Endothelial cell of umbilical vein (primary cell): ENCODE measurements at regions of chr7 and their contacts with region 1.

Region 1: GRCh38 chr7:100626530-100627237 is 14.3 kb downstream of the MOSPD3 start:
- DNase-seq: peak; percentile 83
- H3K4me3 ChIP-seq: peak overlapping the region in 1 of 3 experiments; percentile 16
- H3K27ac ChIP-seq: no peak overlapping the region
- H3K4me1 ChIP-seq: peaks cover 3% of the 10 kb centered on the region
- H3K27me3 ChIP-seq: no peaks in the 10 kb centered on the region
- CTCF ChIP-seq: no peak
- POLR2A ChIP-seq: no peak

Region 2: GRCh38 chr7:100655908-100656674 is 29.4 kb after region 1 on chr7 and contains the start of gene ACTL6B:
- CTCF ChIA-PET with region 1: no interaction called
- POLR2A ChIA-PET with region 1: interaction called, 4 read pairs
- dilution Hi-C with region 1: no loop called
- intact Hi-C with region 1: loop called (anchors 1 kb)
- DNase-seq: peak; percentile 56
- H3K4me3 ChIP-seq: no peak within 1 kb of the TSS
- H3K27ac ChIP-seq: no peak within 1 kb of the TSS
- H3K4me1 ChIP-seq: no peaks in the 10 kb centered on the region
- H3K27me3 ChIP-seq: peaks cover 2 to 4% of the 10 kb centered on the region in 2 experiments
- CTCF ChIP-seq: no peak
- POLR2A ChIP-seq: no peak
- total RNA-seq, gene ACTL6B: not detected in 2 replicates

Region 3: GRCh38 chr7:100719523-100720319 is 93.0 kb after region 1 on chr7:
- CTCF ChIA-PET with region 1: no interaction called
- POLR2A ChIA-PET with region 1: no interaction called
- dilution Hi-C with region 1: no loop called
- intact Hi-C with region 1: no loop called
- DNase-seq: no peak
- H3K4me3 ChIP-seq: no peak overlapping the region
- H3K27ac ChIP-seq: no peak overlapping the region
- H3K4me1 ChIP-seq: no peaks in the 10 kb centered on the region
- H3K27me3 ChIP-seq: peaks cover 27 to 33% of the 10 kb centered on the region in 2 experiments
- CTCF ChIP-seq: peak in 1 of 2 donors; percentile 11
- POLR2A ChIP-seq: no peak

Region 4: GRCh38 chr7:101502466-101503098 is 875.9 kb after region 1 on chr7:
- CTCF ChIA-PET with region 1: no interaction called
- POLR2A ChIA-PET with region 1: no interaction called
- dilution Hi-C with region 1: no loop called
- intact Hi-C with region 1: no loop called
- DNase-seq: no peak
- H3K4me3 ChIP-seq: no peak overlapping the region
- H3K27ac ChIP-seq: no peak overlapping the region
- H3K4me1 ChIP-seq: no peaks in the 10 kb centered on the region
- H3K27me3 ChIP-seq: peaks cover 0 to 1% of the 10 kb centered on the region in 2 experiments
- CTCF ChIP-seq: no peak
- POLR2A ChIP-seq: no peak